H1 (cell line): ENCODE measurements at regions of chr2 and their contacts with region 1.

Region 1: DNA sequence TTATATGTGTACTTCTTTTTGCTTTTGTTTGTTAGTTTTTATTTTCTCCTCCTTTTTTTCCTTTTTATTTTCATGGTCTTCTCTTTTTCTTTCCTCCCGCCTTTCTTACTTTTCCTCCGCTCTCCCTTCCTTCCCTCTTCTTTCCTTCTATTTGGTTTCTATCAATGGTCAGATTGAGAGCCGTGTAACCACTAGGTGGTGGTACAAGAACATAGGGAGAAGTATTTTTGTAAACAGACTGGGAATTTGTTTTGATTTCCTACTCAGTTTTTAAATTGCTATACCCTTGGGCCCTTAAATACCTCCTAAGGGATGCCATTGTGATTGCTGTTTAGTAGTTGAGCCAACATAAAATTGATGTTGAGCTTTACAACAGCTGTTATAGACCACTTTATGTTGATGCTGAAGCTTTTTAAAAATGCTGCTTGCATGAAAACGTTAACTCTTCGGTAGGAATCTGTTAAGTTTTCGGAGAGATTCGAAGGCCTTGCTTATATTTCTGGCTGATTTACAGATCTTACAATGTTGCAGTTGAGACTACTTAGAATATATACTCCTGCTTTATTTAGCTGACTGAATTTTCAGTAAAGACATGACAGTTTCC is 124.2 kb downstream of the UBE2E3 start:
- DNase-seq: no peak
- H3K4me3 ChIP-seq: no peak overlapping the region
- H3K27ac ChIP-seq: no peak overlapping the region
- H3K4me1 ChIP-seq: peaks cover 0 to 5% (median 3%) of the 10 kb centered on the region in 4 experiments; a peak in 4 of 7 replicates
- H3K27me3 ChIP-seq: no peaks in the 10 kb centered on the region
- CTCF ChIP-seq: peak in 2 of 3 experiments; percentile 65 to 66; a peak in 3 of 4 replicates
- EP300 ChIP-seq: no peak
- POLR2A ChIP-seq: no peak
- RAD21 ChIP-seq: peak; percentile 87 to 88

Region 2: GRCh38 chr2:181058378-181059269 is 46.0 kb before region 1 on chr2:
- CTCF ChIA-PET with region 1: no interaction called
- POLR2A ChIA-PET with region 1: no interaction called
- DNase-seq: no peak
- H3K4me3 ChIP-seq: no peak overlapping the region
- H3K27ac ChIP-seq: no peak overlapping the region
- H3K4me1 ChIP-seq: peaks cover 0 to 2% (median 0%) of the 10 kb centered on the region in 4 experiments; a peak in 2 of 7 replicates
- H3K27me3 ChIP-seq: no peaks in the 10 kb centered on the region
- CTCF ChIP-seq: peak in 2 of 3 experiments; percentile 37 to 68; a peak in 2 of 4 replicates
- EP300 ChIP-seq: no peak
- POLR2A ChIP-seq: no peak
- RAD21 ChIP-seq: peak; percentile 80 to 83

Region 3: DNA sequence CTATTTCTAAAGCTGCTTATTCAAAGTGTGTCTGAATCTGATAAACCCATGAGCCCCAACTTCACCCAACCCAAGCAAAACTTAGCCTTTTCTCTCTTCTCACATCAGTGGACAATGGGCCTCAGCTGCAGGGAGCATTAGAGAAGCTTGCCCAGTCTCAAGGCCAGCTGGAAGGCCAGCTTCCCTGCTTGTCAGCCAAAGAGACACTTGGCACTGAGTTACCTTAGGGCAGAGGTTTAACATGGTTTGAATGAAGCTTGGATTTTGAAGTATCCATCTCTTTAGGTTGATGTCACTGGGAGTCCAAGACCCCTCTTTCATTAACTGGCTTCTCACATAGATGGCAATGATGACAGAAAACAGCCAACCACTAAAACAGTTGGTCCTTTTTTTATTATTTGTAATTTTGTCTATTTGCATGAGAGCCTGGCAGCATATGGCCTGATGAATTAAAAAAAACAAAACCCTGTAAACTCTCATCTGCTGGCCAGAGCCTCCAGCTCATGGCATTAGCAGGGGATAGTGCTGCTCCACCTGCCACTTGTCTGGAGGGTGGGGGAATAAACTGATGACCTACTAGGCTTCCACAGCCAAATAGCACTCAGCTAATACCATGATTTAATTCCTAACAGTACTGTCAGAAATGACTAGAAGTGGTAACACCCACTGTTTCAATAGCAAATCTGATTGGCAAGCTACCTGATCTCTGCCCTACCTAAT is 12.8 kb after region 1 on chr2:
- CTCF ChIA-PET with region 1: interaction called, 10 read pairs
- POLR2A ChIA-PET with region 1: no interaction called
- DNase-seq: no peak
- H3K4me3 ChIP-seq: no peak overlapping the region
- H3K27ac ChIP-seq: no peak overlapping the region
- H3K4me1 ChIP-seq: no peaks in the 10 kb centered on the region
- H3K27me3 ChIP-seq: no peaks in the 10 kb centered on the region
- CTCF ChIP-seq: no peak
- EP300 ChIP-seq: no peak
- POLR2A ChIP-seq: no peak
- RAD21 ChIP-seq: no peak

Region 4: DNA sequence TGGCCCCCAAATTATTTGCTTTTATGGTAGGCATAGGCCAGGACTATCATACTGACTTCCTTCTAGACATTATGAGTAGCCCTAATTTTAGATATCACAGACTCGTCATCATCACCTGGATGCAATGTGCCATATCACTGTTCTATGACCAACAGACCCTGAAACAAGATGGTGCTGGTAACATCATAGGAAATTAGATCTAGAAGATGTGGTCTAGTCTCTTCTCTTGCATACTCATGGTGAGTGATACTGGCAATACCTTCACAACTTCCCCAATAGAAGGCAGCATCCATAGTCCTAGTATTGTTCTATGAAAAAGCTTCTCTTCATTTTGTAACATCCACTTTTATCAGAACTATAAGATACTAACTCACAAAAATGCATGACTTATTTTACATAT is 236.3 kb after region 1 on chr2:
- CTCF ChIA-PET with region 1: no interaction called
- POLR2A ChIA-PET with region 1: no interaction called
- DNase-seq: no peak
- H3K4me3 ChIP-seq: no peak overlapping the region
- H3K27ac ChIP-seq: no peak overlapping the region
- H3K4me1 ChIP-seq: no peaks in the 10 kb centered on the region
- H3K27me3 ChIP-seq: no peaks in the 10 kb centered on the region
- CTCF ChIP-seq: no peak
- EP300 ChIP-seq: no peak
- POLR2A ChIP-seq: no peak
- RAD21 ChIP-seq: no peak

Region 5: DNA sequence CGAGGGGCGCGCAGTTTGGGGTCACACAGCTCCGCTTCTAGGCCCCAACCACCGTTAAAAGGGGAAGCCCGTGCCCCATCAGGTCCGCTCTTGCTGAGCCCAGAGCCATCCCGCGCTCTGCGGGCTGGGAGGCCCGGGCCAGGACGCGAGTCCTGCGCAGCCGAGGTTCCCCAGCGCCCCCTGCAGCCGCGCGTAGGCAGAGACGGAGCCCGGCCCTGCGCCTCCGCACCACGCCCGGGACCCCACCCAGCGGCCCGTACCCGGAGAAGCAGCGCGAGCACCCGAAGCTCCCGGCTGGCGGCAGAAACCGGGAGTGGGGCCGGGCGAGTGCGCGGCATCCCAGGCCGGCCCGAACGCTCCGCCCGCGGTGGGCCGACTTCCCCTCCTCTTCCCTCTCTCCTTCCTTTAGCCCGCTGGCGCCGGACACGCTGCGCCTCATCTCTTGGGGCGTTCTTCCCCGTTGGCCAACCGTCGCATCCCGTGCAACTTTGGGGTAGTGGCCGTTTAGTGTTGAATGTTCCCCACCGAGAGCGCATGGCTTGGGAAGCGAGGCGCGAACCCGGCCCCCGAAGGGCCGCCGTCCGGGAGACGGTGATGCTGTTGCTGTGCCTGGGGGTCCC is 352.6 kb after region 1 on chr2 and contains the start of gene ITGA4:
- CTCF ChIA-PET with region 1: interaction called, 15 read pairs
- POLR2A ChIA-PET with region 1: no interaction called
- DNase-seq: peak; percentile 59 to 90
- H3K4me3 ChIP-seq: peak within 1 kb of the TSS; percentile 37 to 71 (median 61)
- H3K27ac ChIP-seq: no peak within 1 kb of the TSS
- H3K4me1 ChIP-seq: peaks cover 0 to 4% (median 2%) of the 10 kb centered on the region in 4 experiments; a peak in 4 of 7 replicates
- H3K27me3 ChIP-seq: peaks cover 14 to 33% (median 27%) of the 10 kb centered on the region in 4 experiments
- CTCF ChIP-seq: peak; percentile 84 to 96 (median 85)
- EP300 ChIP-seq: no peak
- POLR2A ChIP-seq: no peak
- RAD21 ChIP-seq: peak; percentile 81 to 89
- total RNA-seq, gene ITGA4: 2.0 and 2.1 TPM in 2 replicates

Region 6: DNA sequence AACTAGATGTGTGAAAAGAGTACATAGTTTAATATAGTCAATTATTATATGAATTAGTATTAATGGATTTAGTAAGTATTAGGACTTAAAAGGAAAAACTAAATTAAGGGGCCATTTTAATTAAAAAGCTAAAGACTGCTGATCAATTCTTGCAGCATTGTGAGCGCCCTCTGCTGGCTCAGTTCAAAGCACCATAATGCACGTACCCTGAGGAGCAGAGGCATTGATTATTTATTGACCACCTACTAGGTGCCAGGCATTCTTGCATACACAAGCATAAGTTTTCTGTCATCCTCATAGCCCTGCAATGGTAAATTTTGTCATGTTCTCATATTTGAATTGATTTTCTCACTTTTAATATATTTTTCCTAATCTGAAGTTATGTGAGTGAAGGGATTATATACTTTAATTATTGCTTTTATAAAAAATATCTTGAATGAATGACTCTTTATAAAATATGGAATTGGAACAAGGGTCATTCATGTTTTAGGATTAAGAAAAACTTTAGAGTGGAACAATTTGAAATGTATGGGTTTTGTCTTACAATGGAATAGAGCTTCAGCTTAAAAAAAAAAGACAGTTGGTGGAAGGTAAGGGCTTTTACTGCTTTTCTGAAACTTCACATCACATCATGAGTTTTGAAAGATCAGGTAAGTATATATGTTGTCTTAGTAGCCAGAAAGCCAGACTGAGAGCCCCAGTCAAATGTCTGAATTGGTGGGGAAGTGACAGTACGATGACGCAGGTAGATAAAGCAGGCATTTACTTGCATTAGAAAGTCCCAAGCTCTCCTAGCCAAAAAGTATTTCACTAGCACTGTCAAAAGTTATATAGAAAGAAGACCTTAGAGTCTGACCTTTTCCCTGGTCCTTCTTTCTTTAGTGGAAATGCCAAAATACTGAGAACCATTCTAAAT is 362.3 kb after region 1 on chr2:
- CTCF ChIA-PET with region 1: interaction called, 25 read pairs
- POLR2A ChIA-PET with region 1: no interaction called
- DNase-seq: peak in 1 of 2 experiments; percentile 76
- H3K4me3 ChIP-seq: no peak overlapping the region
- H3K27ac ChIP-seq: no peak overlapping the region
- H3K4me1 ChIP-seq: peaks cover 0 to 5% (median 0%) of the 10 kb centered on the region in 4 experiments; a peak in 1 of 7 replicates
- H3K27me3 ChIP-seq: no peaks in the 10 kb centered on the region
- CTCF ChIP-seq: peak; percentile 54 to 74 (median 72)
- EP300 ChIP-seq: no peak
- POLR2A ChIP-seq: no peak
- RAD21 ChIP-seq: peak; percentile 68 to 74